Left ventricle myocardium superior (tissue), 1 donor: ENCODE measurements at regions of chr5 and their contacts with region 1.

Region 1: DNA sequence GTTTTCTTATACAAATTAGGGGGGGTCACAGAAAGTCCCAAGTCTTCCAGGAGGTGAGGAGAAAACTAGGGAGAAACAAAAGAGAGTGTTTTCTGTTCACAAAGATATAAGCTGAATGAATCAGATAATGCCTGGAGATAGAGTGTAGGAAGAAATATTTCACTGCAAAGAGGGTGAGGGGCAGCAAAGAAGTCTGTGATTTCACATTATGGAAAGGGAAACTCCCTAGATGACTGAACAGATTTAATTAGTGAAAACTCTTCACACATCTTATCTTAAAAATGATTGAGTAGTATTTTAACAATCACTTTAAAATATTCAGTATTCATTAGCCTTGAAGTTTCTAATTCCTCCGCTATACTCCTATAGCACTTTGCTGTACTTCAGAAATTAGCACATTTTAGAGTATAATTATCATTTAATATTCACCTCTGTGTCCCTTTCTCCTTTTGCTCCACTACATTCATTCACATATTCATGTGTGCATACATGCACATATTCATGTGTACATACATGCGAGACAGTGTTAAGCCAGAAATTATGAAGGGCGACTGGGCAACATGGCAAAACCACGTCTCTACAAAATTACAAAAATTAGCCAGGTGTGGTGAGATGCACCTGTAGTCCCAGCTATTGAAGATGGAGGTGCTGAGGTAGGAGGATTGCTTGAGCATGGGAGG is 332.2 kb downstream of the HTR1A start:
- DNase-seq: no peak
- ATAC-seq: no peak

Region 2: GRCh38 chr5:62931153-62931950 is 698.7 kb before region 1 on chr5:
- intact Hi-C with region 1: no loop called
- DNase-seq: no peak
- ATAC-seq: no peak

Region 3: GRCh38 chr5:63928451-63928850 is 298.4 kb after region 1 on chr5:
- intact Hi-C with region 1: loop called (anchors 5 kb)
- DNase-seq: no peak
- ATAC-seq: no peak

Region 4: DNA sequence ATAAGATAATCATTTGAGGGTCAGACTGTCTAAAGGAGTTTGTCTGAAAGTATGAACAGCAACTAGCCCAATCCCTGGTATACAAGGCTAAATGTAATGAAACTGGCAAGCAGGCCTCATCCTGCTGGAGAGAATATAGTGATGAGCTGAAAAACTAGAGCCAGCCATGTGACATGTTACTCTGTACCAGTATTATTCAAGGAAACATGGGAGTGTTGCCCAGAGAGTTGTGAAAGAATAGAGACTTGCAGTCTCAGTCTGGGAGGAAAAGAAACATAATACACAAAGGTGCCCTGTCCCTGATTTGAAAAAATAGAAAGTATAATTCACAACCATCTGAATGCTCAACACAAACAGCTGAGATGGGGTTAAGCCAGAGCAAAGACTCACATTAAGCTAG is 370.0 kb after region 1 on chr5:
- intact Hi-C with region 1: no loop called
- DNase-seq: no peak
- ATAC-seq: no peak